ENCODE measurements at regions of chr4 and their contacts with region 1.

Region 1: GRCh38 chr4:78938868-78939666 is at the start of gene PAQR3:
- DNase-seq: peak; percentile 82
- H3K4me3 Mint-ChIP-seq: peak within 1 kb of the TSS; percentile 92
- H3K27ac Mint-ChIP-seq: peak within 1 kb of the TSS; percentile 50
- H3K4me1 Mint-ChIP-seq: peaks cover 28% of the 10 kb centered on the region
- H3K27me3 Mint-ChIP-seq: peaks cover 2% of the 10 kb centered on the region
- total RNA-seq, gene PAQR3: 12.4 to 13.9 TPM

Region 2: GRCh38 chr4:77959566-77960338 is 979.3 kb before region 1 on chr4:
- CTCF ChIA-PET with region 1: no interaction called
- intact Hi-C with region 1: loop called (anchors 10 kb)
- DNase-seq: no peak
- H3K4me3 Mint-ChIP-seq: no peak overlapping the region
- H3K27ac Mint-ChIP-seq: no peak overlapping the region
- H3K4me1 Mint-ChIP-seq: peaks cover 16% of the 10 kb centered on the region
- H3K27me3 Mint-ChIP-seq: no peaks in the 10 kb centered on the region

Region 3: GRCh38 chr4:78612398-78613178 is 326.5 kb before region 1 on chr4:
- CTCF ChIA-PET with region 1: interaction called, 3 read pairs
- intact Hi-C with region 1: loop called (anchors 1 kb)
- DNase-seq: peak; percentile 42
- H3K4me3 Mint-ChIP-seq: no peak overlapping the region
- H3K27ac Mint-ChIP-seq: no peak overlapping the region
- H3K4me1 Mint-ChIP-seq: peaks cover 39% of the 10 kb centered on the region
- H3K27me3 Mint-ChIP-seq: no peaks in the 10 kb centered on the region

Region 4: DNA sequence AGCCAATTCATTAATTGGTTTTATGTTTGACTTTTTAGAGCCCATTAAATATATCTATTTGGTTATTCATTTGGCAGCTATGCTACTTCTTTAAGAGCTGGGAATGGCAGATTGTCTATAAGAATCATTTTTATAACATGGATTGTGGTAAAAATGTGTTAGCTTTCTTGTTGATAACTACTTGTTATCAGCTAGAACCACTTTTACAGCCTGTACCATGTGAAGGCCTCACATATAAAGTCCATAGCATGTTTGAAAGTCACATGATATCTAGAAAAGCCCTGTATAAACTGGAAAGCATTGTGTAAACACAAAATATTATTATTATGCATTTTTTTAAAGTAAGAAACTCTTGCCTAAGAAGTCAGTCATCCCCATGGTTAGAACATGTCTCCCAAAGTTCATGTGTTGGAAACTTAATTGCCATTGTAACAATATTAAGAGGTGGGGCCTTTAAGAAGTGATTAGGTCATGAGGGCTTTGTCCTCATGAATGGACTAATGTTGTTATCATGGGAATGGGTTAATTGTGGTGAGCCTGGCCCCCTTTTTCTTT is 273.8 kb before region 1 on chr4:
- CTCF ChIA-PET with region 1: no interaction called
- intact Hi-C with region 1: no loop called
- DNase-seq: no peak
- H3K4me3 Mint-ChIP-seq: no peak overlapping the region
- H3K27ac Mint-ChIP-seq: no peak overlapping the region
- H3K4me1 Mint-ChIP-seq: peaks cover 42% of the 10 kb centered on the region
- H3K27me3 Mint-ChIP-seq: no peaks in the 10 kb centered on the region

Region 5: GRCh38 chr4:78775303-78776030 is 163.6 kb before region 1 on chr4:
- CTCF ChIA-PET with region 1: no interaction called
- intact Hi-C with region 1: loop called (anchors 1 kb)
- DNase-seq: peak; percentile 84
- H3K4me3 Mint-ChIP-seq: peak overlapping the region; percentile 90
- H3K27ac Mint-ChIP-seq: peak overlapping the region; percentile 95
- H3K4me1 Mint-ChIP-seq: peaks cover 17% of the 10 kb centered on the region
- H3K27me3 Mint-ChIP-seq: no peaks in the 10 kb centered on the region

Region 6: DNA sequence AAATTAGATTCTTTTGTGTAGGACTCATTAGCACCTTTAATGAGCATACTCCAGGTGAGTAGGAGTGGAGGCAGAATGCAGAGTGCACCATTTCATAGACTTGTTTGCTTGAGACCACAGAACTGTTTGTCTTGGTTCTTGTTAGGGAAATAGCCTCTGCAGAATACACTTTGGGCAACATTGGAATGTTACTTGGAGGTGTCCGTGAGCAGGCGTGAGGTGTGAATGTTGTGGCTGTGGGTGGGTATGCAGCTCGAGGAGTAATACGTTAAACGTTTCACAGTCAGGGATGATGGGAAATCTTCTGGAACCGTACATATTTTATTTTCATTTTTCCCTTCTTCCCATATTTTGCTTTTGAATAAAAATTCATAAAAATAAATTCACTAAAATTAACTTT is 31.4 kb before region 1 on chr4:
- CTCF ChIA-PET with region 1: no interaction called
- intact Hi-C with region 1: no loop called
- DNase-seq: no peak
- H3K4me3 Mint-ChIP-seq: no peak overlapping the region
- H3K27ac Mint-ChIP-seq: no peak overlapping the region
- H3K4me1 Mint-ChIP-seq: no peaks in the 10 kb centered on the region
- H3K27me3 Mint-ChIP-seq: no peaks in the 10 kb centered on the region

Region 7: DNA sequence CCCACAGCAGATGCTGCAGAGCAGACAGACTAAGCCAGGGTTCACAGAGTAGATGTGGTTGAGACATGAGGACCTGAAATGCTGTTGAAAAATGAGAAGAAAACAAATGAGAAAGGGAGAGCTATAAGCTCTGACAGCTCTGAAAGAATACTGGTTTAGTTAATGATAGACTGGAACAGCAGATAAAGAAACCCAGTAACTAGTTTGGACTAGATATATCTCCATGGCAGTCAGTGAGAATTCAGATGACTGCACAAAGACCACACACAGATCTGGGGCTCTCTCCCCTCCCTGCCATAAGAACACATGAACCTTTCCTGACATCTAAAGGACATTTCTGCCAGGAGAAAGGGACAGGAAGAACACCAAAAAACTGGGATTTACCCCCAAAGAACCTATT is 378.6 kb after region 1 on chr4:
- CTCF ChIA-PET with region 1: no interaction called
- intact Hi-C with region 1: no loop called
- DNase-seq: no peak
- H3K4me3 Mint-ChIP-seq: no peak overlapping the region
- H3K27ac Mint-ChIP-seq: no peak overlapping the region
- H3K4me1 Mint-ChIP-seq: no peaks in the 10 kb centered on the region
- H3K27me3 Mint-ChIP-seq: peaks cover 3% of the 10 kb centered on the region

Region 8: GRCh38 chr4:79576429-79576753 is 637.3 kb after region 1 on chr4:
- CTCF ChIA-PET with region 1: no interaction called
- intact Hi-C with region 1: no loop called
- DNase-seq: peak; percentile 25
- H3K4me3 Mint-ChIP-seq: no peak overlapping the region
- H3K27ac Mint-ChIP-seq: no peak overlapping the region
- H3K4me1 Mint-ChIP-seq: no peaks in the 10 kb centered on the region
- H3K27me3 Mint-ChIP-seq: no peaks in the 10 kb centered on the region

Region 9: GRCh38 chr4:80007745-80008149 is 1068.7 kb after region 1 on chr4:
- CTCF ChIA-PET with region 1: no interaction called
- intact Hi-C with region 1: loop called (anchors 5 kb)
- DNase-seq: no peak
- H3K4me3 Mint-ChIP-seq: no peak overlapping the region
- H3K27ac Mint-ChIP-seq: no peak overlapping the region
- H3K4me1 Mint-ChIP-seq: peaks cover 38% of the 10 kb centered on the region
- H3K27me3 Mint-ChIP-seq: no peaks in the 10 kb centered on the region

Region 10: GRCh38 chr4:80184053-80184790 is 1245.2 kb after region 1 on chr4:
- CTCF ChIA-PET with region 1: no interaction called
- intact Hi-C with region 1: loop called (anchors 2 kb)
- DNase-seq: peak; percentile 90
- H3K4me3 Mint-ChIP-seq: peak overlapping the region; percentile 97
- H3K27ac Mint-ChIP-seq: peak overlapping the region; percentile 70
- H3K4me1 Mint-ChIP-seq: peaks cover 46% of the 10 kb centered on the region
- H3K27me3 Mint-ChIP-seq: peaks cover 11% of the 10 kb centered on the region

Region 11: GRCh38 chr4:80540785-80541469 is 1601.9 kb after region 1 on chr4:
- CTCF ChIA-PET with region 1: no interaction called
- intact Hi-C with region 1: loop called (anchors 5 kb)
- DNase-seq: no peak
- H3K4me3 Mint-ChIP-seq: no peak overlapping the region
- H3K27ac Mint-ChIP-seq: peak overlapping the region; percentile 41
- H3K4me1 Mint-ChIP-seq: peaks cover 48% of the 10 kb centered on the region
- H3K27me3 Mint-ChIP-seq: peaks cover 34% of the 10 kb centered on the region